ENCODE measurements at regions of chr9 and their contacts with region 1.

Region 1: DNA sequence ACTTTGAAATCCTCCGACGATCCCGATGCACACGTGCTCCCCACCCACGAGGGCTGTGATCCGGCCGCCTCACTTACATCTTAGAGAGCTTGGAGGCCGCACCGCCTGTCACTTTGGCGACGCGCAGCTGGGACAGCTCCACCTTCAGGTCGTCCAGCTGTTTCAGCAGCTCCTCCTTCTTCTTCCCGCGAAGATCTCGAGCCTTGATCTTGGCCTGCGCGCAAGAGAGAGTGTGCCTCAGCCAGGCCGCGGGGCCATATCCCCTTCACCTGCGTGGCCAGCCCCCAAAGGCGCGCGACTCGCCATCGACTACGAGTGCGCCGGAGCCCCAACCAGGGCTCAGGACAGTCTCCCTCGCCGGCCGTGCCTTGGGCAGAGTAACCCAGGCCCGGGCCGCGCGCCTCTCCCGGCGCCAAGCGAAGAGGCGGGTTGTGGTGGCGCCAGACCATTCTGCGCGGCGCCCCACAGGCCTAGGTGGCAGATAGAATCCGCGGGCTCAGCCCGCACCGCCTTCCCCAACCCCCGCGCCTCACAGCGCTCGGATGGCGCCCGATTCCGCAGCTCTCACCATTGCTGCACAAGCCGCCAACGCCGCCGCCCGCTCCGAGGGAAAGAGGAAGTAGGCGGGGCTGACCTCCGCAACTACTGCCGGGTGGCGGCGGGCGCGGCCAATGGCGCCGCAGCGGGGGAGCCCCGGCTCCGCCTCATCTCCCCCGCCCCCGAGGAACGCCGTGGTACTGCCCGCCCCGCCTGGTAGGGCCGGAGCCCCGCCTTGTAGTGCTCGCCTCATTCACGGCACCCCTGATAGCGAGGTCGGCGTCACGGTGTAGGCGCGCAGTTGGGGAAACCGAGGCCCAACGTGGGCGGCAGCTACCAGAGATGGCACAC is at the starts of genes ARPC5L and RPL35:
- DNase-seq: peak; percentile 97
- H3K4me3 Mint-ChIP-seq: peak within 1 kb of the TSS; percentile 95
- H3K27ac Mint-ChIP-seq: peak within 1 kb of the TSS; percentile 97
- H3K4me1 Mint-ChIP-seq: peaks cover 35% of the 10 kb centered on the region
- H3K27me3 Mint-ChIP-seq: peaks cover 3% of the 10 kb centered on the region

Region 2: DNA sequence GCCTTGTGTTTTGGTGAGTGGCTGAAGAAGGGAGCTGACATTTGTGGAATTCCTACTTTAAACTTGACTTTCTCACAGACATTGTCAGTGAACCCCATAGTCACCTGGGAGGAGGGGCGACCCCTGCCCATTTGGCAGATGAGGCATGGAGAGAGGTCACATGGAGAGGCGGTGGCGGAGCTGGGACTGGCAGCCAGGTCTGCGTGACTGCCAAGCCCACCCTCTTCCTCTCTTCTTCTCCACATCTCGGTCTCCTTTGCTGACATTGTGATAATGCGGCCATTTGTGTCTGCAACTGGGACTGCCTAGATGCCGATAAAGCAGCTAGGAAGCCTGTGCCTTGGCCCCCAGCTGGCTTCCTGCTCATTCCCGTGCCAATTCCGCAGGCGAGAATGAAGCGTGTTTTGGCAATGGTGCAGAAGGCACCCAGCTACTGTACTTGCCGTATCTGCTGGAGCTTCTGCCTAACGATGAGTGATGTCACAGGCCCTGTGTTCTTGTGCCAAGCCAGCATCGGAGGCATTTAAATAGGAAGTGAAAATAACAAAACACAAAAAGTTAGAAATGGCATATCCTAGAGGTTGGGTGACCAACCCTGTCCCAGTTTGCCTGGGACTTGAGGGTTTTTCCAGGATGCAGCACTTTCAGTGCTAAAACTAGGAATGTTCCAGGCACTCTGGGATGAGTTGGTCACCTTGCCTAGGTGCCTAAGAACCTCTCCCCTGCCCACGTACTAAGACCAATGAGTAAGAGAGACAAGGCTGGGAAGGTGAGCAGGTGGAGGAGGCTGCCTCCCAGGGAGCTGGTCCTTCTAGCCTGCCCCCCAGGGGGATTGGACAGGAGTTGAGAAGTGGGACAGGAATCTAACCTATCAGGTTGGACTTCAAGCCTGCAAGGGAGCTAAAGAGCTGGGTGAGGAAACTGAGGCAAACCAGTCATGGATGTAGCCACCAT is 61.0 kb before region 1 on chr9:
- CTCF ChIA-PET with region 1: no interaction called
- DNase-seq: no peak
- H3K4me3 Mint-ChIP-seq: no peak overlapping the region
- H3K27ac Mint-ChIP-seq: no peak overlapping the region
- H3K4me1 Mint-ChIP-seq: no peaks in the 10 kb centered on the region
- H3K27me3 Mint-ChIP-seq: peaks cover 57% of the 10 kb centered on the region

Region 3: DNA sequence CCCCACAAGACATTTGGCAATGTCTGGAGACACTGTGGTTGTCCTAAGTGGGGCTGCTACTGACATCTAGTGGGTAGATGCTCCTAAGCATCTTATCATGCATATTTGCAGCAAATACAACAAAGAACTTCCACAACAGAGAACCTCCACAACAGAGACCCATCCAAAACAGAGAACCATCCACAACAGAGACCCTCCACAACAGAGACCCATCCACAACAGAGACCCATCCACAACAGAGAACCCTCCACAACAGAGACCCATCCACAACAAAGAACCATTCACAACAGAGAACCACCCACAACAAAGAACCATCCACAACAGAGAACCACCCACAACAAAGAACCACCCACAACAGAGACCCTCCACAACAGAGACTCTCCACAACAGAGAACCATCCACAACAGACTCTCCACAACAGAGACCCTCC is 33.2 kb after region 1 on chr9:
- CTCF ChIA-PET with region 1: interaction called, 11 read pairs
- DNase-seq: peak; percentile 57
- H3K4me3 Mint-ChIP-seq: no peak overlapping the region
- H3K27ac Mint-ChIP-seq: peak overlapping the region; percentile 63
- H3K4me1 Mint-ChIP-seq: peaks cover 15% of the 10 kb centered on the region
- H3K27me3 Mint-ChIP-seq: peaks cover 5% of the 10 kb centered on the region

Measured in activated naive CD4-positive, alpha-beta T cell treated with anti-CD3 and anti-CD28 coated beads, Interleukin-2, amount 10 ng/mL, durations not matched to agents 7 days and 5 days (primary cell).